B cell (primary cell): ENCODE measurements at regions of chr17 and their contacts with region 1.

Region 1: GRCh38 chr17:78154903-78155811 is 9.0 kb downstream of the C17orf99 start:
- DNase-seq: peak; percentile 92
- ATAC-seq: peak; percentile 81
- H3K4me3 ChIP-seq: peak overlapping the region in 2 of 5 experiments; percentile 1 to 11
- H3K4me3 Mint-ChIP-seq: peak overlapping the region; percentile 69
- H3K27ac ChIP-seq: peak overlapping the region; percentile 92 to 98
- H3K27ac Mint-ChIP-seq: peak overlapping the region; percentile 97
- H3K4me1 ChIP-seq: peaks cover 58 to 87% of the 10 kb centered on the region in 2 donors
- H3K4me1 Mint-ChIP-seq: peaks cover 65% of the 10 kb centered on the region
- H3K27me3 ChIP-seq: no peaks in the 10 kb centered on the region
- H3K27me3 Mint-ChIP-seq: no peaks in the 10 kb centered on the region
- CTCF ChIP-seq: no peak

Region 2: GRCh38 chr17:78101112-78101511 is 54.0 kb before region 1 on chr17:
- CTCF ChIA-PET with region 1: no interaction called
- POLR2A ChIA-PET with region 1: no interaction called
- intact Hi-C with region 1: no loop called
- DNase-seq: no peak
- ATAC-seq: no peak
- H3K4me3 ChIP-seq: no peak overlapping the region
- H3K4me3 Mint-ChIP-seq: no peak overlapping the region
- H3K27ac ChIP-seq: no peak overlapping the region
- H3K27ac Mint-ChIP-seq: no peak overlapping the region
- H3K4me1 ChIP-seq: no peaks in the 10 kb centered on the region
- H3K4me1 Mint-ChIP-seq: no peaks in the 10 kb centered on the region
- H3K27me3 ChIP-seq: no peaks in the 10 kb centered on the region
- H3K27me3 Mint-ChIP-seq: no peaks in the 10 kb centered on the region
- CTCF ChIP-seq: no peak

Region 3: DNA sequence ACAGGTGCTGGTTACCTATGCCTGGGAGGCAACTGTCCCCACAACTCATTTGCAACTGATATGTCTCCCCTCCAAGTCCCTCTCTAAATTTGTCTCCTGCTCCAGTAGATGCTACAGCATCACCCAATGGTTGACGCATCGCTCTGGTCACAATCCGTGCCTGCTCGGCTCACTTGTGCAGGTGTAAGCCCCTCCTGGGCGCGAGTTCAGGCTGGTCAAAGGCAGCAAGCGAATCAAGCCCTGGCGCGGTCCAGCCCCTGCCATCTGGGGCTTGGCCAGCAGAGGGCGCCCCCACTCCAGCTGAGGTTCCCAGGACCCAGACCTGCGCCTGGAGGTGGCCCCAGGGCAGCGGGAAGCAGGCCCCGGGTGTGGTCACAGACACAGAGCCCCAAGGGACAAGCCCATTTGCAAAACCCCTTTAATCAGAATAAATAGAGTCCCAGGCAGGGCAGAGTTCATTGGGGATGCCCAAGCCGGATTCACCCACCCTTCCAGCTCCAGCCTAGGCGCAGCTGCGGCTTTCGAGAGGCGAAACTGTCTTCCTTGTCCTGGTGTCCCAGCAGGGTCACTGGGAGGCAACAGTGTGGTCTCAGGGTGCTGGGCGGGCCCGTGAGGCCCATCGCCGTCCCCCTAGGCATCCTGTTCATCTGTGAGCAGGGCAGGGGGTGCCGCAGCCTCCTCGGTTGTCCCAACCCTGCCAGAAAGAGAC is 42.5 kb before region 1 on chr17:
- CTCF ChIA-PET with region 1: interaction called, 3 read pairs
- POLR2A ChIA-PET with region 1: interaction called, 11 read pairs
- intact Hi-C with region 1: no loop called
- DNase-seq: peak; percentile 84
- ATAC-seq: peak; percentile 84
- H3K4me3 ChIP-seq: no peak overlapping the region
- H3K4me3 Mint-ChIP-seq: no peak overlapping the region
- H3K27ac ChIP-seq: peak overlapping the region in 1 of 2 donors; percentile 43
- H3K27ac Mint-ChIP-seq: peak overlapping the region; percentile 96
- H3K4me1 ChIP-seq: peaks cover 12 to 22% of the 10 kb centered on the region in 2 donors
- H3K4me1 Mint-ChIP-seq: peaks cover 24% of the 10 kb centered on the region
- H3K27me3 ChIP-seq: no peaks in the 10 kb centered on the region
- H3K27me3 Mint-ChIP-seq: no peaks in the 10 kb centered on the region
- CTCF ChIP-seq: peak; percentile 98

Region 4: GRCh38 chr17:78128551-78129350 is 26.4 kb before region 1 on chr17 and contains the start of gene TMC6:
- CTCF ChIA-PET with region 1: interaction called, 10 read pairs
- POLR2A ChIA-PET with region 1: interaction called, 13 read pairs
- intact Hi-C with region 1: loop called (anchors 1 kb)
- DNase-seq: peak; percentile 88
- ATAC-seq: peak; percentile 21
- H3K4me3 ChIP-seq: peak within 1 kb of the TSS; percentile 38 to 97 (median 89)
- H3K4me3 Mint-ChIP-seq: peak within 1 kb of the TSS; percentile 96
- H3K27ac ChIP-seq: peak within 1 kb of the TSS; percentile 88 to 92
- H3K27ac Mint-ChIP-seq: peak within 1 kb of the TSS; percentile 99
- H3K4me1 ChIP-seq: peaks cover 68 to 80% of the 10 kb centered on the region in 2 donors
- H3K4me1 Mint-ChIP-seq: peaks cover 73% of the 10 kb centered on the region
- H3K27me3 ChIP-seq: no peaks in the 10 kb centered on the region
- H3K27me3 Mint-ChIP-seq: no peaks in the 10 kb centered on the region
- CTCF ChIP-seq: no peak
- total RNA-seq, gene TMC6: 891 and 910 TPM in 2 replicates

Region 5: DNA sequence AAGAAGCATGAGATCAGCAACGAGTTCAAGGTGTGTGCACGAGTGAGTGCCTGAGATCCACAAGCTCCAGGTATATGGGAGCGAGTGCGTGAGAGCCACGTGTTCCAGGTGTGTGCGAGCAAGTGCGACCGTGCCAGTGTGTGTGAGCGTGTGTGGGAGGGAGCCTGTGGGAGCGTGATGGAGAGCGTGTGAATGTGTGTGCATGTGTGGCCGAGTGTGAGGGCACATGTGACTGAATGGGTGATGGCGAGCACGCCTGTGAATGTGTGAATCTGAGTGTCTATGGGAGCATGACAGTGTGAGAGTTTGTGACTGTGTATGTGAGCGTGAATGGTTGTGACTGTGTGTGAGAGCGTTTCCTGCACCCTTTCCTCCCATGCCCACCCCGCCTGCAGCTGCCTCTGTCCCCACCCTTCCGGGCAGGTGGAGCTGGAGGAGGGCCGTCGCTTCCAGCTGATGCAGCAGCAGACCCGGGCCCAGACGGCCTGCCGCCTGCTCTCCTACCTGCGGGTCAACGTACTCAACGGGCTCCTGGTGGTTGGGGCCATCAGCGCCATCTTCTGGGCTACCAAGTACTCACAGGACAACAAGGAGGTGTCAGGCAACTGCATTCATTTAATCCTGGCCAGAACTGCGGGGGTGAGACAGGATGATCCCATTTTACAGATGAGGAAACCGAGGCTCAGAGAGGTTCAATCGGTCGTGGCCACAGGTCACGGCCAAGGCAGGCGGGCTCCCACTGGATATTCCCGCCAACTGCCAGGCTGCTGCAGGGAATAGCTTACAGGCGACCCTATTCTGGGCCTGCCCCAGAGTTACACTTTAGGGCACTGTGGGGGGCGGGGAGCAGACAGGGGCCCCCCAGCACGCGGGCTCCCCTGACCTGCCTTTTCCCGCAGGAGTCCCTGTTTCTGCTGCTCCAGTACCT is 20.9 kb before region 1 on chr17:
- CTCF ChIA-PET with region 1: interaction called, 34 read pairs
- POLR2A ChIA-PET with region 1: interaction called, 11 read pairs
- intact Hi-C with region 1: loop called (anchors 1 kb)
- DNase-seq: peak; percentile 90
- ATAC-seq: peak; percentile 7
- H3K4me3 ChIP-seq: peak overlapping the region in 3 of 5 experiments; percentile 6 to 35 (median 23)
- H3K4me3 Mint-ChIP-seq: peak overlapping the region; percentile 99
- H3K27ac ChIP-seq: peak overlapping the region; percentile 88 to 92
- H3K27ac Mint-ChIP-seq: peak overlapping the region; percentile 95
- H3K4me1 ChIP-seq: peaks cover 66 to 88% of the 10 kb centered on the region in 2 donors
- H3K4me1 Mint-ChIP-seq: peaks cover 79% of the 10 kb centered on the region
- H3K27me3 ChIP-seq: no peaks in the 10 kb centered on the region
- H3K27me3 Mint-ChIP-seq: no peaks in the 10 kb centered on the region
- CTCF ChIP-seq: peak; percentile 80

Region 6: GRCh38 chr17:78140169-78140976 is 14.8 kb before region 1 on chr17:
- CTCF ChIA-PET with region 1: interaction called, 34 read pairs
- POLR2A ChIA-PET with region 1: interaction called, 23 read pairs
- intact Hi-C with region 1: loop called (anchors 1 kb)
- DNase-seq: peak; percentile 96
- ATAC-seq: peak; percentile 88
- H3K4me3 ChIP-seq: no peak overlapping the region
- H3K4me3 Mint-ChIP-seq: peak overlapping the region; percentile 46
- H3K27ac ChIP-seq: peak overlapping the region; percentile 43 to 51
- H3K27ac Mint-ChIP-seq: peak overlapping the region; percentile 73
- H3K4me1 ChIP-seq: peaks cover 71 to 94% of the 10 kb centered on the region in 2 donors
- H3K4me1 Mint-ChIP-seq: peaks cover 82% of the 10 kb centered on the region
- H3K27me3 ChIP-seq: no peaks in the 10 kb centered on the region
- H3K27me3 Mint-ChIP-seq: no peaks in the 10 kb centered on the region
- CTCF ChIP-seq: no peak

Region 7: GRCh38 chr17:78168242-78168902 is 13.2 kb after region 1 on chr17 and contains the start of gene SYNGR2:
- CTCF ChIA-PET with region 1: interaction called, 11 read pairs
- POLR2A ChIA-PET with region 1: interaction called, 15 read pairs
- intact Hi-C with region 1: loop called (anchors 1 kb)
- DNase-seq: peak; percentile 91
- ATAC-seq: peak; percentile 71
- H3K4me3 ChIP-seq: peak within 1 kb of the TSS; percentile 1 to 88 (median 74)
- H3K4me3 Mint-ChIP-seq: peak within 1 kb of the TSS; percentile 83
- H3K27ac ChIP-seq: peak within 1 kb of the TSS; percentile 93 to 97
- H3K27ac Mint-ChIP-seq: peak within 1 kb of the TSS; percentile 90
- H3K4me1 ChIP-seq: peaks cover 46 to 58% of the 10 kb centered on the region in 2 donors
- H3K4me1 Mint-ChIP-seq: peaks cover 51% of the 10 kb centered on the region
- H3K27me3 ChIP-seq: no peaks in the 10 kb centered on the region
- H3K27me3 Mint-ChIP-seq: no peaks in the 10 kb centered on the region
- CTCF ChIP-seq: no peak
- total RNA-seq, gene SYNGR2: 380 and 390 TPM in 2 replicates

Region 8: GRCh38 chr17:78272181-78272913 is 117.2 kb after region 1 on chr17:
- CTCF ChIA-PET with region 1: no interaction called
- POLR2A ChIA-PET with region 1: interaction called, 11 read pairs
- intact Hi-C with region 1: no loop called
- DNase-seq: peak; percentile 80
- ATAC-seq: peak; percentile 70
- H3K4me3 ChIP-seq: no peak overlapping the region
- H3K4me3 Mint-ChIP-seq: peak overlapping the region; percentile 68
- H3K27ac ChIP-seq: no peak overlapping the region
- H3K27ac Mint-ChIP-seq: peak overlapping the region; percentile 83
- H3K4me1 ChIP-seq: peaks cover 4 to 33% of the 10 kb centered on the region in 2 donors
- H3K4me1 Mint-ChIP-seq: peaks cover 43% of the 10 kb centered on the region
- H3K27me3 ChIP-seq: peaks cover 0 to 23% (median 10%) of the 10 kb centered on the region in 4 experiments
- H3K27me3 Mint-ChIP-seq: peaks cover 25% of the 10 kb centered on the region
- CTCF ChIP-seq: no peak